ENCODE measurements at regions of chr22 and their contacts with region 1.

Region 1: GRCh38 chr22:26756675-26757293 is 99.4 kb downstream of the MIAT start:
- DNase-seq: no peak
- ATAC-seq: peak; percentile 91
- H3K4me3 ChIP-seq: no peak overlapping the region
- H3K27ac ChIP-seq: no peak overlapping the region
- H3K4me1 ChIP-seq: no peaks in the 10 kb centered on the region
- H3K27me3 ChIP-seq: no peaks in the 10 kb centered on the region
- CTCF ChIP-seq: peak; percentile 61 to 72 (median 69)
- EP300 ChIP-seq: no peak
- POLR2A ChIP-seq: no peak
- RAD21 ChIP-seq: peak; percentile 86

Region 2: GRCh38 chr22:26658671-26659478 is 97.9 kb before region 1 on chr22:
- CTCF ChIA-PET with region 1: no interaction called
- POLR2A ChIA-PET with region 1: no interaction called
- RAD21 ChIA-PET with region 1: no interaction called
- SMC1A ChIA-PET with region 1: no interaction called
- in situ Hi-C with region 1: no loop called
- intact Hi-C with region 1: no loop called
- DNase-seq: no peak
- ATAC-seq: peak; percentile 88
- H3K4me3 ChIP-seq: peak overlapping the region; percentile 77
- H3K27ac ChIP-seq: no peak overlapping the region
- H3K4me1 ChIP-seq: peaks cover 18% of the 10 kb centered on the region
- H3K27me3 ChIP-seq: 0 out of 4 replicates have a peak, but pooled peaks cover 0 to 4% of the 10 kb centered on the region in 2 experiments
- CTCF ChIP-seq: no peak
- EP300 ChIP-seq: no peak
- POLR2A ChIP-seq: no peak; the same call in 1 of the 2 replicates
- RAD21 ChIP-seq: no peak

Region 3: DNA sequence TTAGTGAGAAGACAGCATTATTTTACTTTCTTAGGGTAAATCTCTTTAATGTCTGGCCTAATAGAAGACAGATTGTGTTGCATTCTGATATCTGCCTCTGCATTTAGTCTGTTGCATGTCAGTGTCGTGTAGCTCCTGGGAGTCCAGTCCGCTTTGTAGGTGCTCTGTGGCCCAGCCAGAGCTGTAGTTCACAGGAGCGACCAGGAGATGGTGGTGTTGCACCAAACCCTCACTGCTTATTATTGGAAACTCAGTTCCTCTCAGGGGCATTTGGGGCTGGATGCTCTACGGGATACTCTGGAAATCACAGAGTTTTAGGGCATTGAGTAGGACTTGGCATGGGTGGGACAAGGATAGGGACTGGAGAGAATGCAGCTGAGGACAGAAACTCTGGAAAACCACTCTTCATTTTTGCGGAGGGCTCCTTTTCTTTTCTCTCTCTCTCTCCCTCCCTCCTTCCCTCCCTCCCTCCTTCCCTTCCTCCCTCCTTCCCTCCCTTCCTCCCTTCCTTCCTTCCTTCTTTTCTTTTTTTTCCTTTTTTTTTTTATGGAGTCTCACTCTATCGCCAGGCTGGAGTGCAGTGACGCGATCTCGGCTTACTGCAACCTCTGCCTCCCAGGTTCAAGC is 77.7 kb before region 1 on chr22:
- CTCF ChIA-PET with region 1: interaction called, 4 read pairs
- POLR2A ChIA-PET with region 1: no interaction called
- RAD21 ChIA-PET with region 1: interaction called, 4 read pairs
- SMC1A ChIA-PET with region 1: interaction called, 3 read pairs
- in situ Hi-C with region 1: no loop called
- intact Hi-C with region 1: loop called (anchors 1 kb)
- DNase-seq: peak; percentile 53
- ATAC-seq: peak; percentile 80
- H3K4me3 ChIP-seq: no peak overlapping the region
- H3K27ac ChIP-seq: no peak overlapping the region
- H3K4me1 ChIP-seq: peaks cover 14% of the 10 kb centered on the region
- H3K27me3 ChIP-seq: no peaks in the 10 kb centered on the region
- CTCF ChIP-seq: peak; percentile 87 to 97 (median 96)
- EP300 ChIP-seq: no peak
- POLR2A ChIP-seq: no peak
- RAD21 ChIP-seq: peak; percentile 96

Region 4: DNA sequence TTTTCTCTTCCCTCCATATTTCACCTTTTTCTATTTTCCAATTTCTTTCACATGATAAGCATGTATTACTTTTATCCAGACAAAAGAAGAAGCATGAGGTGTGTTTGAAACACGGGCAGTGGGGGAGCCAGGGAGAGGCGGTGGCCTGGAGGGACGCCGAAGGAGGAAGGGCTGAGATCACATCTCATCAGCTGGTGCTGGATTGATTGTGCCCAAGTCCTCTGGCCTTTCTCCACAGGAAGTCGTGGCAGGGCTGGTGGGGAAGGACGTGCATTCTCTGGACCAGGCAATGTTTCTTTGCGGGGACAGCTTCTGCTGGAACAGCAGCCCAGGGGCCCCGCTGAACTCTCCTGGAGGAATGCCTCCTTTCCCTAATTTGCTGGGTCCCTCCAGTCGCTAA is 16.5 kb before region 1 on chr22:
- CTCF ChIA-PET with region 1: no interaction called
- POLR2A ChIA-PET with region 1: no interaction called
- RAD21 ChIA-PET with region 1: no interaction called
- SMC1A ChIA-PET with region 1: no interaction called
- in situ Hi-C with region 1: no loop called
- intact Hi-C with region 1: no loop called
- DNase-seq: no peak
- ATAC-seq: no peak
- H3K4me3 ChIP-seq: no peak overlapping the region
- H3K27ac ChIP-seq: no peak overlapping the region
- H3K4me1 ChIP-seq: no peaks in the 10 kb centered on the region
- H3K27me3 ChIP-seq: no peaks in the 10 kb centered on the region
- CTCF ChIP-seq: no peak
- EP300 ChIP-seq: no peak
- POLR2A ChIP-seq: no peak
- RAD21 ChIP-seq: no peak

Region 5: GRCh38 chr22:27804470-27805297 is 1047.9 kb after region 1 on chr22:
- CTCF ChIA-PET with region 1: no interaction called
- POLR2A ChIA-PET with region 1: no interaction called
- RAD21 ChIA-PET with region 1: no interaction called
- SMC1A ChIA-PET with region 1: no interaction called
- in situ Hi-C with region 1: no loop called
- intact Hi-C with region 1: loop called (anchors 5 kb)
- DNase-seq: no peak
- ATAC-seq: peak; percentile 90
- H3K4me3 ChIP-seq: no peak overlapping the region
- H3K27ac ChIP-seq: no peak overlapping the region
- H3K4me1 ChIP-seq: no peaks in the 10 kb centered on the region
- H3K27me3 ChIP-seq: peaks cover 0 to 6% of the 10 kb centered on the region in 2 experiments; a peak in 3 of 4 replicates
- CTCF ChIP-seq: peak; percentile 45 to 63 (median 60)
- EP300 ChIP-seq: no peak
- POLR2A ChIP-seq: no peak
- RAD21 ChIP-seq: peak; percentile 54

Region 6: DNA sequence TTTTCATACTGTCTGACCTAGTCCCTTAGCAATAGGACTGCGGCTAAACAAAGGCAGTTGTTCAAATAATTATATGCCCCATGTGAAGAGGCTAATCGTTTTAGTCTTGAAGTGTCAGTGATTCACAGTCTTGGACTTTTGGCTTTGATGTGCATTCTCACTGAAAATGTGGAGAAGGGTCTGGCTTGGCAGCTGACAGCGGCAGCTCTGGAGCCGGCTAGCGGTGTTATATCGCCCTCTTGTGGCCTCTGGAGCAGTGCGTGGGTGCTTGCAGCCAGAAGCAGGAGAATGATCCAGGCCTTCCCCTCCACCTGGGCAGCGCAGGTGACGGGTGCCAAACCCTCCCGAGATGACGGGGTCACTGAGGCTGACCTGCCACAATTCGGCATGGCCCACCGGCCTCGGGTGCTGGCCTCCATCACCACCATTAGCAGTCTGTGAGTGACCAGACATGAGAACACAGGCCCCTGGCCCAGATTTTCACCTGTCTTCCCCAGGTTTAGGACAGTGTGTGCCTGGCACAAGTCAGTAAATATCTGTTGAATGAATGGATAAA is 1252.6 kb after region 1 on chr22:
- CTCF ChIA-PET with region 1: no interaction called
- POLR2A ChIA-PET with region 1: no interaction called
- RAD21 ChIA-PET with region 1: no interaction called
- SMC1A ChIA-PET with region 1: no interaction called
- in situ Hi-C with region 1: loop called (anchors 25 kb)
- intact Hi-C with region 1: no loop called
- DNase-seq: peak; percentile 9
- ATAC-seq: peak; percentile 97
- H3K4me3 ChIP-seq: no peak overlapping the region
- H3K27ac ChIP-seq: no peak overlapping the region
- H3K4me1 ChIP-seq: no peaks in the 10 kb centered on the region
- H3K27me3 ChIP-seq: no peaks in the 10 kb centered on the region
- CTCF ChIP-seq: peak; percentile 93 to 98 (median 95)
- EP300 ChIP-seq: no peak
- POLR2A ChIP-seq: no peak
- RAD21 ChIP-seq: peak; percentile 90

Measured in GM12878 (cell line).